Activated CD8-positive, alpha-beta T cell treated with anti-CD3 and anti-CD28 coated beads for 36 hours (primary cell): ENCODE measurements at regions of chr9 and their contacts with region 1.

Region 1: GRCh38 chr9:124708633-124709291 is 62.3 kb downstream of the NR6A1 start:
- DNase-seq: no peak
- ATAC-seq: no peak
- H3K4me3 Mint-ChIP-seq: no peak overlapping the region
- H3K27ac Mint-ChIP-seq: no peak overlapping the region
- H3K4me1 Mint-ChIP-seq: peaks cover 2% of the 10 kb centered on the region
- H3K27me3 Mint-ChIP-seq: peaks cover 4% of the 10 kb centered on the region
- CTCF ChIP-seq: no peak

Region 2: DNA sequence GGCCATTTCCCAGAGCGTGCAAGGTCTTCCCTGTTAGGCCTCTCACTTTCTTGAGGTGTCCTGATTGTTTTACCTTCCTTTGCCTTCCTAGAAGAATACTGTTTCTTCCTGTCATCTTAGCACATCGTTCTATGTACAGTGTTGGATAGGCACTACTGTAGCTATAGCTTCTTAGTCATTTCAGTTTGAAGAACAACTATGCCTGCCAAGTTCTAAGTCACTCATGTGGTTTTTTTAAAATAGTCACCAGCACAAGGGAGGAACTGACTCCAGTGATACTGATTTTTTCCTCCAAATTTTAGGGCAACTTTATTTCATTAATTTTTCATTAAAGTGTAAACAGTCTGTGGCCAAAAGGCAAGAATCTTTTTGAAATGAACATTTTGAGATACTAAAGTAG is 79.2 kb before region 1 on chr9:
- CTCF ChIA-PET with region 1: interaction called, 33 read pairs
- POLR2A ChIA-PET with region 1: no interaction called
- intact Hi-C with region 1: no loop called
- DNase-seq: no peak
- ATAC-seq: no peak
- H3K4me3 Mint-ChIP-seq: no peak overlapping the region
- H3K27ac Mint-ChIP-seq: no peak overlapping the region
- H3K4me1 Mint-ChIP-seq: no peaks in the 10 kb centered on the region
- H3K27me3 Mint-ChIP-seq: no peaks in the 10 kb centered on the region
- CTCF ChIP-seq: no peak

Region 3: GRCh38 chr9:124658165-124659017 is 50.4 kb before region 1 on chr9:
- CTCF ChIA-PET with region 1: interaction called, 15 read pairs
- POLR2A ChIA-PET with region 1: no interaction called
- intact Hi-C with region 1: no loop called
- DNase-seq: peak; percentile 73
- ATAC-seq: peak; percentile 98
- H3K4me3 Mint-ChIP-seq: peak overlapping the region; percentile 94
- H3K27ac Mint-ChIP-seq: peak overlapping the region; percentile 90
- H3K4me1 Mint-ChIP-seq: peaks cover 28% of the 10 kb centered on the region
- H3K27me3 Mint-ChIP-seq: peaks cover 3% of the 10 kb centered on the region
- CTCF ChIP-seq: no peak

Region 4: GRCh38 chr9:124721109-124721906 is 12.5 kb after region 1 on chr9:
- CTCF ChIA-PET with region 1: interaction called, 13 read pairs
- POLR2A ChIA-PET with region 1: no interaction called
- intact Hi-C with region 1: no loop called
- DNase-seq: no peak
- ATAC-seq: no peak
- H3K4me3 Mint-ChIP-seq: no peak overlapping the region
- H3K27ac Mint-ChIP-seq: no peak overlapping the region
- H3K4me1 Mint-ChIP-seq: peaks cover 8% of the 10 kb centered on the region
- H3K27me3 Mint-ChIP-seq: peaks cover 9% of the 10 kb centered on the region
- CTCF ChIP-seq: no peak

Region 5: GRCh38 chr9:125176636-125177035 is 467.9 kb after region 1 on chr9:
- CTCF ChIA-PET with region 1: no interaction called
- POLR2A ChIA-PET with region 1: no interaction called
- intact Hi-C with region 1: no loop called
- DNase-seq: no peak
- ATAC-seq: no peak
- H3K4me3 Mint-ChIP-seq: no peak overlapping the region
- H3K27ac Mint-ChIP-seq: no peak overlapping the region
- H3K4me1 Mint-ChIP-seq: peaks cover 50% of the 10 kb centered on the region
- H3K27me3 Mint-ChIP-seq: no peaks in the 10 kb centered on the region
- CTCF ChIP-seq: no peak